ENCODE measurements at regions of chr1 and their contacts with region 1.

Region 1: GRCh38 chr1:230104395-230105244 is 37.6 kb downstream of the GALNT2 start:
- DNase-seq: peak; percentile 94
- ATAC-seq: peak; percentile 91
- H3K4me3 ChIP-seq: peak overlapping the region; percentile 6 to 39; a peak in 3 of 4 replicates
- H3K27ac ChIP-seq: peak overlapping the region; percentile 60
- H3K4me1 ChIP-seq: peaks cover 30 to 49% of the 10 kb centered on the region in 2 experiments
- H3K27me3 ChIP-seq: no peaks in the 10 kb centered on the region
- CTCF ChIP-seq: no peak
- POLR2A ChIP-seq: no peak
- RAD21 ChIP-seq: peak; percentile 29; the same call in 1 of the 2 replicates

Region 2: DNA sequence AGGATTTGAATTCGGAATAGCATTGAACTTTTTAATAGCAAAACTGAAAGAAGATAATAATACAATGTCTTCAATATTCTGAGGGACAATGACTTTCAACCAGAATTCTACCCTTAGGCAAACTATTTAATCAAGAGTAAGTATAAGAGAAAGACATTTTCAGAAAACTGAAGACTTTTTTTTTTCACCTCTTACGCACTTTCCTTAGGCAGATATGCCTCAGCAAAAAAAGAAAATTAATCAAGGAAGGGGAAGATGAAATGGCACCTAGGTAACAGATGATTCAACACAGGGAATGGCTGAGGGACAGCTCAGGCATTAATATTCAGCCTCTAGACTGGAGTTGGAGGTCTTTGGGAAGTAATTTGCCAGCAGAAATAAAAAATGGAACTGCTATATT is 293.7 kb before region 1 on chr1:
- CTCF ChIA-PET with region 1: no interaction called
- POLR2A ChIA-PET with region 1: no interaction called
- RAD21 ChIA-PET with region 1: no interaction called
- intact Hi-C with region 1: no loop called
- DNase-seq: no peak
- ATAC-seq: no peak
- H3K4me3 ChIP-seq: no peak overlapping the region
- H3K27ac ChIP-seq: no peak overlapping the region
- H3K4me1 ChIP-seq: no peaks in the 10 kb centered on the region
- H3K27me3 ChIP-seq: peaks cover 10% of the 10 kb centered on the region
- CTCF ChIP-seq: no peak
- POLR2A ChIP-seq: no peak
- RAD21 ChIP-seq: no peak

Region 3: GRCh38 chr1:230066466-230067404 is 37.9 kb before region 1 on chr1 and contains the start of gene GALNT2:
- CTCF ChIA-PET with region 1: no interaction called
- POLR2A ChIA-PET with region 1: no interaction called
- RAD21 ChIA-PET with region 1: no interaction called
- intact Hi-C with region 1: loop called (anchors 1 kb)
- DNase-seq: peak; percentile 52
- ATAC-seq: peak; percentile 93
- H3K4me3 ChIP-seq: peak within 1 kb of the TSS; percentile 79 to 89
- H3K27ac ChIP-seq: peak within 1 kb of the TSS; percentile 58
- H3K4me1 ChIP-seq: peaks cover 11 to 17% of the 10 kb centered on the region in 2 experiments; a peak in 3 of 4 replicates
- H3K27me3 ChIP-seq: no peaks in the 10 kb centered on the region
- CTCF ChIP-seq: no peak
- POLR2A ChIP-seq: peak; percentile 32
- RAD21 ChIP-seq: no peak
- total RNA-seq, gene GALNT2: 40.8 TPM

Region 4: GRCh38 chr1:230084881-230085515 is 19.6 kb before region 1 on chr1:
- CTCF ChIA-PET with region 1: no interaction called
- POLR2A ChIA-PET with region 1: interaction called, 3 read pairs
- RAD21 ChIA-PET with region 1: no interaction called
- intact Hi-C with region 1: loop called (anchors 1 kb)
- DNase-seq: no peak
- ATAC-seq: peak; percentile 59
- H3K4me3 ChIP-seq: peak overlapping the region in 1 of 2 experiments; percentile 39; a peak in 2 of 4 replicates
- H3K27ac ChIP-seq: peak overlapping the region; percentile 56
- H3K4me1 ChIP-seq: peaks cover 24 to 43% of the 10 kb centered on the region in 2 experiments
- H3K27me3 ChIP-seq: no peaks in the 10 kb centered on the region
- CTCF ChIP-seq: no peak
- POLR2A ChIP-seq: no peak
- RAD21 ChIP-seq: no peak; the same call in 1 of the 2 replicates

Region 5: GRCh38 chr1:230117694-230118093 is 13.1 kb after region 1 on chr1:
- CTCF ChIA-PET with region 1: no interaction called
- POLR2A ChIA-PET with region 1: no interaction called
- RAD21 ChIA-PET with region 1: no interaction called
- intact Hi-C with region 1: no loop called
- DNase-seq: no peak
- ATAC-seq: no peak
- H3K4me3 ChIP-seq: no peak overlapping the region
- H3K27ac ChIP-seq: no peak overlapping the region
- H3K4me1 ChIP-seq: 0 out of 4 replicates have a peak, but pooled peaks cover 0 to 2% of the 10 kb centered on the region in 2 experiments
- H3K27me3 ChIP-seq: no peaks in the 10 kb centered on the region
- CTCF ChIP-seq: no peak
- POLR2A ChIP-seq: no peak
- RAD21 ChIP-seq: no peak

Measured in HCT116 (cell line).